ENCODE measurements at regions of chr15 and their contacts with region 1.

Region 1: GRCh38 chr15:69031013-69032001 is 16.8 kb downstream of the NOX5 start:
- DNase-seq: peak; percentile 81
- ATAC-seq: peak; percentile 93
- H3K4me3 Mint-ChIP-seq: peak overlapping the region; percentile 58
- H3K27ac Mint-ChIP-seq: no peak overlapping the region
- H3K4me1 Mint-ChIP-seq: peaks cover 10% of the 10 kb centered on the region
- H3K27me3 Mint-ChIP-seq: peaks cover 18% of the 10 kb centered on the region
- CTCF ChIP-seq: 0 out of 2 replicates have a peak, but pooled peaks have one; percentile 32

Region 2: DNA sequence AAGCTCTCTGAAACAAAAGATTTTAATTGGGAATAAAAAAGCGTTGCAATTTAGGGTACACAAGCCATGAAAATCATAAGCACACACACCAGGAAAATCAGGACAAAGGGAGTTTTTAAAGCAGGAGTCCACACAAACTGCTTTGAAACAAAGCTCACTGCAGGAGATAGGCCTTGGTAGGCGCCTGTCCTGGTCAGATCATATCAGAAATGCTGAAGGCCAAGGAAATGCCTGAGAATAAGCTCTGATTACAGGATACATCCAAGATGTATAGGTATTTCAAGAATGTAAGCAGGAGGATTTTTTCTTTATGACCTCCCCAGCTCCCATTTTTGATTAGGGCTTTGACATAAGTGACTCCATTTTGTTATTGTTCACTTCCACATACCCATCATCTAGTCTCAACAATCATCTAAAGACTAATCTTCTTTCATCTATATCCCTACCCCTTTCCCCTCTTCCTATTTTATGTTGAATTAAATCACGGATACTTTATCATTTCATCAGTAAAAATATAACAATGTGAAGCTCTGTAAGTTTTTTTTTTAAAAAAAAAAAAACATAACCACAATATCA is 82.3 kb before region 1 on chr15:
- CTCF ChIA-PET with region 1: interaction called, 10 read pairs
- POLR2A ChIA-PET with region 1: no interaction called
- DNase-seq: no peak
- ATAC-seq: no peak
- H3K4me3 Mint-ChIP-seq: no peak overlapping the region
- H3K27ac Mint-ChIP-seq: no peak overlapping the region
- H3K4me1 Mint-ChIP-seq: 0 out of 2 replicates have a peak, but pooled peaks cover 3% of the 10 kb centered on the region
- H3K27me3 Mint-ChIP-seq: no peaks in the 10 kb centered on the region
- CTCF ChIP-seq: no peak

Region 3: DNA sequence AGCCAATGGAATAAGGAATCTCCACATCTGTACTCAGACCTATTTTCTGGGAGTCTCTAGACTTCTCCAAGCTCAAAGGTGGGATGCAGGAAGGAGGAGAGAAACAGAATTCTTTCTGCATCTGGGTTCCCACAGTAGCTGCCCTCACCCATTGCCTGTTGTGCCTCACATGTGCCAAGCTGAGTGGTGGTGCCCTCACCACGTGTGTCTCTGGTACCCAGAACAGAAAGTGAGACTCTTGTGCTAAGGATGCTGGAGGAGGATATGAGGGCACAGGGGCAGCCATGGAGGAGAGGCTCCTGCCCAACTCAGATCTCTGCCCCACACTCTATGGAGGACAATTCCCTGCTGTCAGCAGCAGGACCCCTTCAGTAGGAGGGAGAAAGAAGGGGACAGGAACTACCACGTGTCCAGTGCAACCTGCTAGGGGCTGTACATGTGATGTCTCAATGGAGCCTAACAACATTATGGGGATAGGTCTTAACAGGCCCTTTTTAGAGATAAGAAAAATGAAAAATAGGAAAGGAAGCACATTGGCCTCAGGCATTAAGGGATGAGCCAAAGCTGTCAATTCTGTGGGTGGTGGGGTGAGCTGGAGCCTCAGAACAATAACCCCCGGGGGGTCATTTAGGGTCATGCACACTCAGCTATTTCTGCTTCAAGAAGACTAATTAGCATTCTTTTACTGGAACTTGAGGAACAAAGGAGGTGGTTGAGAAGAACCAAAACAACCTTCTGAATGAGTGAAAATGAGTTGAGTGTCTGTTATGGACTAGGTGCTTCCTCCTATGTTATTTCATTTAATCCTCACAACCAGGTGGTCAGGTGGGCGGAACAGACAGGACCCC is 33.2 kb before region 1 on chr15:
- CTCF ChIA-PET with region 1: interaction called, 14 read pairs
- POLR2A ChIA-PET with region 1: no interaction called
- DNase-seq: no peak
- ATAC-seq: no peak
- H3K4me3 Mint-ChIP-seq: no peak overlapping the region
- H3K27ac Mint-ChIP-seq: no peak overlapping the region
- H3K4me1 Mint-ChIP-seq: peaks cover 48% of the 10 kb centered on the region
- H3K27me3 Mint-ChIP-seq: no peaks in the 10 kb centered on the region
- CTCF ChIP-seq: no peak

Region 4: DNA sequence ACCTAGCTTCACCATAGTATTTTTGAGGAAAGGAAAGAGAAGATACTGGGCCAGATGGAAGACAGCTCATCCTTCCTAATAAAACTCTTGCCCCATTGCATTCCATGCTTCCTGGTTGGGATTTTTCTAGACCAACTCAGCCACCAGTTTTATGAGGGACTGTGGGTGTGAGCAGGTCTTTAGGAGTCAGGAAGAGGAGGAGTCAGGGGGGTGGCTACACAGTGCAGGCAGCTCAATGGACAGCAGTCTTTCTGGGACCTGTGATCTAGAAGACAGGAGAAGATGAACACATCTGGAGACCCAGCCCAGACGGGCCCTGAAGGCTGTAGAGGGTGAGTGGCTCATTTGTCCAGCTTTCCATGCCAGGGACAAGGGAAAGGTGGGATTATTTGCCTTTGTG is 16.9 kb before region 1 on chr15 and contains the start of gene NOX5:
- CTCF ChIA-PET with region 1: interaction called, 37 read pairs
- POLR2A ChIA-PET with region 1: interaction called, 3 read pairs
- DNase-seq: no peak
- ATAC-seq: no peak
- H3K4me3 Mint-ChIP-seq: no peak within 1 kb of the TSS
- H3K27ac Mint-ChIP-seq: no peak within 1 kb of the TSS
- H3K4me1 Mint-ChIP-seq: peaks cover 4% of the 10 kb centered on the region; the same call in 1 of the 2 replicates
- H3K27me3 Mint-ChIP-seq: peaks cover 10% of the 10 kb centered on the region
- CTCF ChIP-seq: no peak
- total RNA-seq, gene NOX5: not detected in 3 replicates

Region 5: DNA sequence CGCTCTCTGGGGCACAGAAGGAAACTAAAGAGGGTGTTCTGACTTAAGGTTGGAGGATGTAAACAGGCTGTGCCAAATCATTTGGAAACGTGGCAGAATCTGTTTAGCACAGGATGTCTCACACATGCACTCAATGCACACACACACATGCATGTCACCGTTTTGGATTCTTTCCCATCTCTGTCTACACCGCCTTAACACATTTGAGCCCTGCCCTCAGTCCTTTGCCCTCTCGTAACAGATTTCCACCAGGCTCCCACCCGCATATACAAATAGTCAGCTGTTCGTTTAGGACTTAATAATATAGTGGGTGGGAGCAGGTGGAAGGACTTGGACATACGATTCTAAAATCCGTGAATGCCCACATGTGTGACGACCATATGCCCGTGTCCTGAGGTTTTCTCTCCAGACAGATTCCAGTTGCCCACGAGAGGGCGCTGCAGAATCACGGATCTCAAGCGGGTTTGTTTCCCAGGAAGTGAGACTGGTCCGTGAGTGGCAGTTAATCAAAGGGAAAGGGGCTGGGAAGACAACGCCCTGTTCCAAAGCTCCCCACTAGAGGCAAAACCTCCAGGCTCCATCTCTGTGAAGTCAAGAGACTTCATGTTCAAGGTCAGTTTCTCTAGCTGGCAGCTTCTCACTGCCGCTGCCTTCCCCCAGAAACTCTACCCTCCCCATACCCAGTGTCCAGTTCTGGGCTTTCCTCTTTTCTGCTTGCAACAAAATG is 27.7 kb after region 1 on chr15:
- CTCF ChIA-PET with region 1: interaction called, 24 read pairs
- POLR2A ChIA-PET with region 1: no interaction called
- DNase-seq: peak; percentile 92
- ATAC-seq: peak; percentile 83
- H3K4me3 Mint-ChIP-seq: no peak overlapping the region
- H3K27ac Mint-ChIP-seq: no peak overlapping the region
- H3K4me1 Mint-ChIP-seq: peaks cover 15% of the 10 kb centered on the region
- H3K27me3 Mint-ChIP-seq: peaks cover 7% of the 10 kb centered on the region; the same call in 1 of the 2 replicates
- CTCF ChIP-seq: peak; percentile 80

Region 6: GRCh38 chr15:69154078-69154477 is 122.8 kb after region 1 on chr15:
- CTCF ChIA-PET with region 1: no interaction called
- POLR2A ChIA-PET with region 1: no interaction called
- DNase-seq: no peak
- ATAC-seq: no peak
- H3K4me3 Mint-ChIP-seq: no peak overlapping the region
- H3K27ac Mint-ChIP-seq: no peak overlapping the region
- H3K4me1 Mint-ChIP-seq: peaks cover 1% of the 10 kb centered on the region
- H3K27me3 Mint-ChIP-seq: peaks cover 13% of the 10 kb centered on the region
- CTCF ChIP-seq: no peak

Region 7: DNA sequence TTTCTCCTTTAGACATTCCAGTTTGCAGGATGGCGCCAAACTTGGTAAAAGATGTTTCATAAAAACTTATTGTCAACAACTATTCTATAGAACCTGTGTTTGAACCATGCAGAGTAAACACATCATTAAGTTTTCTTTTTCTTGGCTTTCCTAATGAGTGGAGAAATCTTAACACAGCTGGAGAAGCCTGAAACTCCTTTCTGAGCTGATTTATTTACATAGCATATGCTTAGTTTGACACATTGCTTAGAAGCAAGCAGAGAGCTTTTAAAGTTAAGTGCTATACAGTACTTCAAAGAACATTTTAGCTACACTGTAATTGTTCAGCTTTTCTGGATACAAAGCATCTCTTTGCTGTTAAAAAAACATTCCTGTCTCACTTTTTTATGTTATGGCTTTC is 206.4 kb after region 1 on chr15:
- CTCF ChIA-PET with region 1: interaction called, 13 read pairs
- POLR2A ChIA-PET with region 1: no interaction called
- DNase-seq: no peak
- ATAC-seq: no peak
- H3K4me3 Mint-ChIP-seq: no peak overlapping the region
- H3K27ac Mint-ChIP-seq: no peak overlapping the region
- H3K4me1 Mint-ChIP-seq: no peaks in the 10 kb centered on the region
- H3K27me3 Mint-ChIP-seq: no peaks in the 10 kb centered on the region
- CTCF ChIP-seq: no peak

Measured in WTC11 (cell line).